AG04449 (cell line): ENCODE measurements at regions of chr3 and their contacts with region 1.

Region 1: GRCh38 chr3:133927540-133928066 is 31.9 kb upstream of the RAB6B start:
- DNase-seq: no peak
- H3K4me3 ChIP-seq: peak overlapping the region; percentile 52
- CTCF ChIP-seq: peak; percentile 72

Region 2: GRCh38 chr3:133865136-133865855 is 62.3 kb before region 1 on chr3:
- CTCF ChIA-PET with region 1: no interaction called
- POLR2A ChIA-PET with region 1: no interaction called
- DNase-seq: no peak
- H3K4me3 ChIP-seq: no peak overlapping the region
- CTCF ChIP-seq: no peak

Region 3: GRCh38 chr3:133915685-133916658 is 11.6 kb before region 1 on chr3:
- CTCF ChIA-PET with region 1: interaction called, 15 read pairs
- POLR2A ChIA-PET with region 1: no interaction called
- DNase-seq: no peak
- H3K4me3 ChIP-seq: no peak overlapping the region
- CTCF ChIP-seq: no peak

Region 4: GRCh38 chr3:133943639-133944141 is 16.1 kb after region 1 on chr3:
- CTCF ChIA-PET with region 1: interaction called, 14 read pairs
- POLR2A ChIA-PET with region 1: no interaction called
- DNase-seq: peak; percentile 68
- H3K4me3 ChIP-seq: no peak overlapping the region
- CTCF ChIP-seq: no peak

Region 5: DNA sequence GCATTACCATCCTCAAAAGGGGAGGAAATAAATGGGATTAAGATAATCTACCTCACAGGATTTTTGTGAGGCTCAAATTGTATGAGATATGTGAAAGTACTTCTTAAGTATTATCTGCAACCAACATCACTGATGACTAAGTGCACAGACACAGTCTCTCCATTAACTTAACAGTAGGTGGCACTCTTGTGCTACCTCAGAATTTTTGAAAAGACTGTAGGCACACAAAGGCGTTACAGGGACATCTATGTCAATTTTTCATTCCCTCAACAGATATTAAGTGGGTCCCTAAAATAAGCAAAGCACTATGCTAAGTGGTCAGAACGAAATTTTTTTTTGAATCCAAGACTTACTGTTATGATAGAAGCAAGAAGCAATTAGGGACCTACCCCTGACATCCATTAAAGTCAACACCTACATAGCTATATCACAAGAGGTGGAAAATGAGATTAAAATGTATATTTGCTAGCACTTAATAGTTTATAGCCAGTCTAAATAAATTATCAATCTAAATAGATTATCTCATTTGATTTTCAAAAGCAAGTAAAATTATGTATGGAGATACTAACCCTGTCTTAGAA is 270.2 kb after region 1 on chr3:
- CTCF ChIA-PET with region 1: interaction called, 10 read pairs
- POLR2A ChIA-PET with region 1: no interaction called
- DNase-seq: peak; percentile 24
- H3K4me3 ChIP-seq: no peak overlapping the region
- CTCF ChIP-seq: peak; percentile 65